Ascending aorta (tissue), 2 donors: ENCODE measurements at regions of chr12 and their contacts with region 1.

Region 1: DNA sequence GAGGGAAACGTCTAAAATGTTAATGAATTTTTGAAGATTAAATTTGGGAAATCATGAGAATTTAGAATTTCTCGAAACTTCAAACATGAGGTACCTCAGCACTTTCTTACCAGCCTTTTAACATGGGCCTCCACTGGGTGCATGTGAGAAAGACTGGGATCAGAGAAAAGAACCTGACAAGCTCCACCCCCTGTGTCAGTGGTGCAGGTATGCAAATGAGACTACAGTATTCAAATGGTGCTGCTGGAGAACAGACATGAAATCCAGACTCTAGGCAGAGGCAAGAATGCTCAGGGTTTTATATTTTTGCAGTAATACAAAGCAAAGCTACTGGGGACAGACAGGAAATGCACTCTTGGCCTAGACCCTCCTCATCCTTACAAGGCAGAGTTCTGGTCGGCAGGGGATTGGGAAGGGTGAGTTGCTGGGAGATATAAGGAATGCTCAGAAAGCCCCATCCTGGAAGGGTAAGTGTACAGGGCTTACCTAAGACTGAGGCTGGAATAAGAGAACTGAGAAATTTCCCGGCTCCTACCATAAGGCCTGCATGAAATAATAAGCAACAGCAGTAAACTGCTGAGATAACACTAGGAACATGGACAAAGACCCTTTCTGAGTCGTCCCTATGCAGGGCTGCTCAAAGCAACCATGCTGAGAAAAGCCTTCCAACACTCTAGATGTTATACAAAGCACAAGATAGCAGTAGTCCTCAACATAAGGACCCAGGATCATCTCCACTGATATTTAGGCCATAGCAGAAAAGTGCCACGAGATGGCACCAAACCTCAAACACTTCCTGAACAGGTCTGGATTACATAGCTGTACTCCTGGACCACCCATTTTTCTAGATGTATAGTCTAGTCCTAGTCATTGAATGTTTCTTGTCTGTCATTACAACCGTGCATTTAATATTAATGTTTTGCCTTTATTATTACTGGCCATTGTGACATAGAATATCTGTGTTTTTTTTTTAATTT is 260.8 kb downstream of the RASSF9 start:
- DNase-seq: no peak
- H3K4me3 ChIP-seq: no peak overlapping the region
- H3K27ac ChIP-seq: no peak overlapping the region
- H3K4me1 ChIP-seq: no peaks in the 10 kb centered on the region
- H3K27me3 ChIP-seq: no peaks in the 10 kb centered on the region
- CTCF ChIP-seq: peak in 2 of 3 experiments; percentile 49 to 61

Region 2: GRCh38 chr12:85476756-85477155 is 98.7 kb before region 1 on chr12:
- intact Hi-C with region 1: loop called (anchors 10 kb)
- DNase-seq: no peak
- H3K4me3 ChIP-seq: no peak overlapping the region
- H3K27ac ChIP-seq: no peak overlapping the region
- H3K4me1 ChIP-seq: no peaks in the 10 kb centered on the region
- H3K27me3 ChIP-seq: no peaks in the 10 kb centered on the region
- CTCF ChIP-seq: no peak

Region 3: DNA sequence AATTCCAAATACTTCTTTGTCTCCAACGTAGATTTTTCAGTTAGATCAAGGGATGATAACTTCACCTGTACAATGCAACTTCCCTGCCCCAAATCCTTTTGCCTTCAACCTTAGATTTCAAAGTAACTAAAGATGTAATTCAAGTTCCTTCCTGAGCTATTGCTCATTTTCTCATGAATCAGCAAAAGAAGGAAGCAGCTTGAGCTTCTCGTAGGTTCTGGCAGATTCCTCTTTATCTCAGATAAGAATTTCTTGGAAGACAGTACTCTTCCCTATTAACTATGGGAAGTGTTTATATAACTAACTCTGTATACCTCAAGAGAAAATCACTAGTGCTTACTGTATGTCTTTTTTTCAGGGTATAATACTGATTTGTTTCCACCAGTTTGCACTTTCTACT is 57.0 kb after region 1 on chr12:
- intact Hi-C with region 1: no loop called
- DNase-seq: no peak
- H3K4me3 ChIP-seq: no peak overlapping the region
- H3K27ac ChIP-seq: no peak overlapping the region
- H3K4me1 ChIP-seq: no peaks in the 10 kb centered on the region
- H3K27me3 ChIP-seq: no peaks in the 10 kb centered on the region
- CTCF ChIP-seq: no peak

Region 4: GRCh38 chr12:85866986-85867776 is 291.8 kb after region 1 on chr12:
- intact Hi-C with region 1: loop called (anchors 1 kb)
- DNase-seq: no peak
- H3K4me3 ChIP-seq: peak overlapping the region; percentile 13 to 28
- H3K27ac ChIP-seq: no peak overlapping the region
- H3K4me1 ChIP-seq: no peaks in the 10 kb centered on the region
- H3K27me3 ChIP-seq: no peaks in the 10 kb centered on the region
- CTCF ChIP-seq: peak; percentile 44 to 85 (median 82)